ENCODE measurements at regions of chr17 and their contacts with region 1.

Region 1: DNA sequence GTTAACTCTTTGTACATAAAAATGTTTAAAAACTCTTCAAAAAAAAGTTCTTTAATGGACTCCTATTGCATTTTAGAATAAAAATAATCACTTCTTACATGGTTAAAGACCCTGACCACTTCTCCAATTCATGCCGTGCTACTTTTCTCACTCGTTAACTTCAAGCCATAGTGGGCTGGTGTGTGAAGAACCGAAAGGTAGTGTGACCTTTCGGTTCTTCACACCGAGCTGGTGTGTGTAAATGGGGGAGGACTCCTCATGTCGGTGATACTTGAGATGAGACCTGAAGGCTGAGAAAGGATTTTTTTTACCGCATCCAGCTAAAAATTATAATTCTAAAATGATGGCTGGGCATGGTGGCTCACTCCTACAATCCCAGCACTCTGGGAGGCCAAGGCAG is 22.1 kb downstream of the RFFL start:
- DNase-seq: no peak
- ATAC-seq: no peak
- H3K4me3 ChIP-seq: no peak overlapping the region
- H3K27ac ChIP-seq: no peak overlapping the region
- H3K4me1 ChIP-seq: no peaks in the 10 kb centered on the region
- H3K27me3 ChIP-seq: no peaks in the 10 kb centered on the region
- CTCF ChIP-seq: no peak

Region 2: GRCh38 chr17:35056013-35056412 is 14.6 kb after region 1 on chr17:
- CTCF ChIA-PET with region 1: interaction called, 13 read pairs
- POLR2A ChIA-PET with region 1: no interaction called
- in situ Hi-C with region 1: no loop called
- intact Hi-C with region 1: no loop called
- DNase-seq: no peak
- ATAC-seq: no peak
- H3K4me3 ChIP-seq: no peak overlapping the region
- H3K27ac ChIP-seq: no peak overlapping the region
- H3K4me1 ChIP-seq: peaks cover 9% of the 10 kb centered on the region
- H3K27me3 ChIP-seq: no peaks in the 10 kb centered on the region
- CTCF ChIP-seq: no peak

Region 3: DNA sequence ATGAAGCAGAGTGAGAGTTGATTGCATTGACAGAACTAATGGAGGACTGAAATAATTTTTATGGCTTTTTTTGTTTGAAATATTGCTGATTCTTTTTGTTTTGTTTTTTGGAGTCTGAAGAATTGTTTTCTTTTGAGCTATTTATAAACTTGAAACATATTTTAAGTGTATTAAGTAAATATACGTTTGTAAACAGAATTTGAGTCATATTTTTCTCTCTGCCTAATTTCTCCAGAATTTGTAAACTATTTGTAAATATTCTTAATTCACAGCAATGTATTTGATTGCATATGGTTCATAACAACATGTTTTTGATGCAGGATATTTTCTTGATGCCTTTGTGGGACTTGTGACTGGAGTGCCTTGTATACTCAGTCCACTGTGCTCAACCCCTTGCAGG is 281.4 kb after region 1 on chr17:
- CTCF ChIA-PET with region 1: no interaction called
- POLR2A ChIA-PET with region 1: no interaction called
- in situ Hi-C with region 1: no loop called
- intact Hi-C with region 1: no loop called
- DNase-seq: no peak
- ATAC-seq: no peak
- H3K4me3 ChIP-seq: no peak overlapping the region
- H3K27ac ChIP-seq: no peak overlapping the region
- H3K4me1 ChIP-seq: no peaks in the 10 kb centered on the region
- H3K27me3 ChIP-seq: peaks cover 2% of the 10 kb centered on the region; the same call in 1 of the 2 replicates
- CTCF ChIP-seq: no peak

Region 4: DNA sequence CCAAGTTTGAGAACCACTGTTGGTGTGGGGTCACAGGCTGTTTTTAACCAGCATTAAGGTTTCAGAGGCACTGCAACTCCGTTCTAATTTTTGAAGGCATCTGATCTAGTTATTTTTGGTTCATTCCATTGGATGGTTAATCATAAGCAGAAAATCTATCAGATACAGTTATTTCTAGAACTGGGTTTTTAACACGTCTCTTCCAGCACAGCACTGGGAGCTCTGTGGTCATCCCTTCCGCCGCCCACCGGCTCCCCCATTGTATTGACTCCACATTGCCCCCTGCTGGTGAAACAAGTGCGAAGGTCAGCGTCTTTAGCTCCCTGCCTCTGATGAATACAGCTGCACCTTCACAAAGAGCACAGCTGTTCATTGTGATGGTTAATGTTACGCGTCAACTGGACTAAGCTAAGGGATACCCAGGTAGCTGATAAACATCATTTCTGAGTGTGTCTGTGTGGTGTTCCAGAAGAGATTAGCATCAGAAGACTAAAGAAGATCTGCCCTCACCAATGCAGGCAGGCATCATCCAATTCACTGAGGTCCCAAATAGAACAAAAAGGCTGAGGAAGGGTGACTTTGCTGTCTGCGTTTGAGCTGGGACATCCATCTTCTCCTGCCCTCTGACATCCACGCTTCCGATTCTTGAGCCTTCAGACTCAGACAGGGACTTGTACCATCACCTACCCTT is 1031.2 kb after region 1 on chr17:
- CTCF ChIA-PET with region 1: no interaction called
- POLR2A ChIA-PET with region 1: no interaction called
- in situ Hi-C with region 1: no loop called
- intact Hi-C with region 1: no loop called
- DNase-seq: peak; percentile 22
- ATAC-seq: peak; percentile 90
- H3K4me3 ChIP-seq: no peak overlapping the region
- H3K27ac ChIP-seq: no peak overlapping the region
- H3K4me1 ChIP-seq: no peaks in the 10 kb centered on the region
- H3K27me3 ChIP-seq: peaks cover 7% of the 10 kb centered on the region; the same call in 1 of the 2 replicates
- CTCF ChIP-seq: peak; percentile 84

Measured in Panc1 (cell line).